BJ (cell line): ENCODE measurements at regions of chr7 and their contacts with region 1.

Region 1: DNA sequence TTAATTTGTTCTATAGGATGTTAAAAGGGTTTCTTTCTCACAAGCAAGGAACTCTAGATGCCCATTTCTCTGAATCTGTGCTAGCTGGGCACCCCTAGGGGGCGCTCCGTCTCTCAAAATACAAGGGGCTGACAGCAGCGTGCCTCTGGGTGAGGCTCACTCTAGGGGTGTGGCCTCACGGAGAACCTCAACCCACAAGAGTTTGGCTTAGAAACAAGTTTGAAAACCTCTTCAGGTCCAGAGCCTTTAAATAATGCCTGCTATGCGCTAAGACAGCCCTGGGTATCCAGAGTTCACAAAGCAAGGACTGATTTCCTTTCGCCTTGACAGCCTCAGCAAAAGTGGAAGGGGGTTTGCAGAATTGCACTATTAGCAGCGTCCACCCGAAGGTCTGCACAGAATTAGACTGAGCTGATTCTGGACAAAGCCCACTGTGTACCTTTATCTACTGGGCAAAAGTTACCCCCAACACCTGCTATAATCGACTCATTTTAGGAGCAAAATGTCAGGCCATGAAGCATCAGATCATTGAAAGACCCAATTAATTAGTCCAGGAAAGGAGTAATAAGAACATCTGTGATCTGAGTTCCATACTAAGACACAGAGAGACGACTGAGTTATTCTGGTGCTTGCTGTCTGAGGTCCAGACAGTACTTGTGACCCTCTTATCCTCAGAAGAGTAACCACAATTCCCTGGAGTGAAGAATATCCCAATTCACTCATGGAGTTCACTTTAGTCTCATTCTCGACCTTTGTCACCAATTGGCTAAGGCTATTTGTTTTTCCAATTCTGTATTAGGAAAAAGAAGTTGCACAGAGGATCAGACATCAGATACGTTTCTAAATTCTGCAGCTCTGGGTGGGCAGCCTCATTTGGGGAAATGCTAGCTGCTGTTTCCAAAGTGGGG is 574 bp upstream of the CPED1 start:
- DNase-seq: peak; percentile 70
- H3K4me3 ChIP-seq: peak overlapping the region; percentile 45
- H3K27me3 ChIP-seq: no peaks in the 10 kb centered on the region
- CTCF ChIP-seq: peak; percentile 97

Region 2: GRCh38 chr7:121016966-121017365 is 29.0 kb after region 1 on chr7:
- CTCF ChIA-PET with region 1: interaction called, 11 read pairs
- POLR2A ChIA-PET with region 1: no interaction called
- DNase-seq: peak; percentile 37
- H3K4me3 ChIP-seq: no peak overlapping the region
- H3K27me3 ChIP-seq: no peaks in the 10 kb centered on the region
- CTCF ChIP-seq: no peak

Region 3: DNA sequence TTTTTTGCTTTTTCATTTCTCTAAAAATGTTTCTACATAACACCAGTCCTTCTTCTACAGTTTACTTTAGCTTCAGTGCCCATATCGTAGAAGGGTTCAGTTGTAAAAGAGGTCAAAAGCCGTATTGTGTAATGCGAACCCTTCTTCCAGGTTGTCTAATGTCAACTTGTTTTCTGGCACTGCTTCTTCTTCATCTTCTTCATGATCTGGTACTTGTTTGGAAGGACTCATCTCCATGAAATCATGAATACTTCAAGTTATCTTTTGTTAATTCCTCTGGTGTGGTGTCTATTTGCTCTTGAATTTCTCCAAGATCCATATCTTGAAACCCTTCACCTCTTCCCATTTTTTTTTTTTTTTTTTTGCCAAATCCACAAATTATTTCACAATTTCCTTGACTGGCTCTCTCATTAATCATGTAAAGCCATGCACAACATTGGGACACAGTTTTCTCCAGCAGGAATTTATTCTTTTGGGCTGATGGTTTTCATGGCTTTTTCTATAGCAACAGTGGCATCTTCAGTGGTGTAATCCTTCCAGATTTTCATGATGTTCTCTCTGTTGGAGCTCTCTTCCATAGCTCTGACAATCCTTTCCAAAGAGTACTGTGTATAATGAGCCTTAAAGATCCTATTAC is 85.6 kb after region 1 on chr7:
- CTCF ChIA-PET with region 1: interaction called, 10 read pairs
- POLR2A ChIA-PET with region 1: no interaction called
- DNase-seq: no peak
- H3K4me3 ChIP-seq: no peak overlapping the region
- H3K27me3 ChIP-seq: no peaks in the 10 kb centered on the region
- CTCF ChIP-seq: no peak

Region 4: DNA sequence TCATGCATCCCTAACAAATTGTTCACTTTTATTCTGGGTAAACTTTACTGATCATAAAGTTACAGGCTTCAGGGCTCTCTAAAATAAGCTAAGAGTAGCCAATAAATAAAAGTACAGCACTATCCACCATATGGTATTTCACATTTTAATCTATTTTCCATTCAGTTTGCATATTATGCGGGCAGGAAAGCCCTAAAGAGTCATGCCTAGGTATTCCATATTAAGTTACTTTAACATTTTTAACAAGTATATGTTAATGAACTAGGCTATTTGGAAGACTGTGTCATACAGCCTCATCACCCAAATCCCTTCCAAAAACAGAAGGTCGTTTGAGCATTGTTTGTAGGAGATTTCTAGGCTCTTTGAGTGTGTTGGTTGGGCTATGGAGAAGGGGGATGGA is 106.9 kb after region 1 on chr7:
- CTCF ChIA-PET with region 1: interaction called, 13 read pairs
- POLR2A ChIA-PET with region 1: no interaction called
- DNase-seq: no peak
- H3K4me3 ChIP-seq: no peak overlapping the region
- H3K27me3 ChIP-seq: no peaks in the 10 kb centered on the region
- CTCF ChIP-seq: no peak